Calu3 (cell line): ENCODE measurements at regions of chr9 and their contacts with region 1.

Region 1: GRCh38 chr9:5899292-5899691 is 8.6 kb downstream of the MLANA start:
- DNase-seq: no peak
- H3K4me3 Mint-ChIP-seq: no peak overlapping the region
- H3K27ac Mint-ChIP-seq: no peak overlapping the region
- H3K4me1 Mint-ChIP-seq: no peaks in the 10 kb centered on the region
- H3K27me3 Mint-ChIP-seq: no peaks in the 10 kb centered on the region
- CTCF ChIP-seq: no peak

Region 2: GRCh38 chr9:5799314-5799713 is 100.0 kb before region 1 on chr9:
- CTCF ChIA-PET with region 1: interaction called, 3 read pairs
- intact Hi-C with region 1: loop called (anchors 5 kb)
- DNase-seq: peak; percentile 12
- H3K4me3 Mint-ChIP-seq: no peak overlapping the region
- H3K27ac Mint-ChIP-seq: no peak overlapping the region
- H3K4me1 Mint-ChIP-seq: no peaks in the 10 kb centered on the region
- H3K27me3 Mint-ChIP-seq: no peaks in the 10 kb centered on the region
- CTCF ChIP-seq: peak; percentile 39

Region 3: GRCh38 chr9:5958273-5958672 is 59.0 kb after region 1 on chr9:
- CTCF ChIA-PET with region 1: no interaction called
- intact Hi-C with region 1: no loop called
- DNase-seq: no peak
- H3K4me3 Mint-ChIP-seq: no peak overlapping the region
- H3K27ac Mint-ChIP-seq: no peak overlapping the region
- H3K4me1 Mint-ChIP-seq: no peaks in the 10 kb centered on the region
- H3K27me3 Mint-ChIP-seq: no peaks in the 10 kb centered on the region
- CTCF ChIP-seq: no peak